ENCODE measurements at regions of chr9 and their contacts with region 1.

Region 1: GRCh38 chr9:35732122-35732799 is at the starts of genes CREB3 and TLN1:
- DNase-seq: peak; percentile 97 to 99 (median 99)
- H3K4me3 ChIP-seq: peak within 1 kb of the TSS; percentile 47 to 90 (median 66)
- H3K27ac ChIP-seq: peak within 1 kb of the TSS; percentile 83 to 99 (median 93)
- H3K4me1 ChIP-seq: peaks cover 48 to 57% of the 10 kb centered on the region in 2 donors
- H3K27me3 ChIP-seq: no peaks in the 10 kb centered on the region
- CTCF ChIP-seq: no peak
- POLR2A ChIP-seq: peak; percentile 46 to 90
- total RNA-seq, gene CREB3: 47.0 to 142 (median 60.3) TPM
- total RNA-seq, gene TLN1: 157 to 565 (median 372) TPM

Region 2: DNA sequence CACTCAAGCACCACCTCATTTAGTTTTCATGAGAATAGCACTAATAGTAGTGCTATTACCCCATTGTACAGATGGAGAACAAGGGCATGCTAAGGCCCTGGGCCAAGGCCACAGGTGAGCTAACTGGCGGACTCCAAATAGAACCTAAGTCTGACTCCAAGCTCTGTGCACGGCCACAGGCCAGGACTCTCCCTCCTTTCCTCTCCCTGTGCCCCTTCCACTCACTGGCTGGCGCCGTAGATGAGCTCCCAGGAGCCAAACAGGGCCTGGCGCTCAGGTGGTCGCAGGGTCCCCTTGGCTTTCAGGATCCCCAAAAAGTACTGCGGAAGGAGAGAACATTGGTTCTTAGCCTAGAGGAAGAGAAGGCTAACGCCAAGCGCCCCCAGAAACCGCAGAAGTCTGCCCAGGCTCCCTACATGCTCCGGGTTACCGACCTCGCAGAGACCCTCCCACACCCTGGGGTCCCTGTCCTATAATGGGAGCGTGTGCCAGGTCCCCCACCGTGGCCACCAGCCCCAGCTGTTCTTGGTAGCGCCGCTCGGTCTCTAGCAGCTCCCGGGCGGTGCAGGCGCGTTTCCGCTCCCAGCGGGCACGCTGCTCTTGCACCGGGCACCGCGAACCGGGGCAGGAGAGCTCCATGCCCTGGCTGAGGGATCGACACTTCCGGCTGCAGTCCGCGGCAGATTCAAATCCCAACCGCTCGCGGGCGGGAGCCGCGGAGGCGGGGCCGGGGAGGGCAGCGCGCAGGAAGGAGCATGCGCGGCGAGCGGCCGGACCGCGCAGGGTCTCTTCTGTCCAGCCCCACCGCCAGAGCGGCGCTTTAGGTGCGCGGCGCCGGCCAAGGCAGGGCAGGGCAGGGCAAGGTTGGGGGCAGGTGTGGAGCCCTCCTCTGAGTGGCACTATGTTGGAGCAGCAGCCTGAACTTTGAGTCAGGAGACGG is 67.5 kb before region 1 on chr9 and contains the start of gene ARHGEF39:
- intact Hi-C with region 1: loop called in 1 of 2 experiments (anchors 5 kb)
- DNase-seq: peak; percentile 79 to 91 (median 84)
- H3K4me3 ChIP-seq: peak within 1 kb of the TSS in 2 of 4 donors; percentile 47 to 64
- H3K27ac ChIP-seq: peak within 1 kb of the TSS in 3 of 5 donors; percentile 20 to 46 (median 44)
- H3K4me1 ChIP-seq: peaks cover 12 to 30% of the 10 kb centered on the region in 2 donors
- H3K27me3 ChIP-seq: no peaks in the 10 kb centered on the region
- CTCF ChIP-seq: peak in 2 of 6 experiments; percentile 4 to 19
- POLR2A ChIP-seq: peak; percentile 35 to 36
- total RNA-seq, gene ARHGEF39: 0.42 to 18.4 (median 0.96) TPM

Region 3: DNA sequence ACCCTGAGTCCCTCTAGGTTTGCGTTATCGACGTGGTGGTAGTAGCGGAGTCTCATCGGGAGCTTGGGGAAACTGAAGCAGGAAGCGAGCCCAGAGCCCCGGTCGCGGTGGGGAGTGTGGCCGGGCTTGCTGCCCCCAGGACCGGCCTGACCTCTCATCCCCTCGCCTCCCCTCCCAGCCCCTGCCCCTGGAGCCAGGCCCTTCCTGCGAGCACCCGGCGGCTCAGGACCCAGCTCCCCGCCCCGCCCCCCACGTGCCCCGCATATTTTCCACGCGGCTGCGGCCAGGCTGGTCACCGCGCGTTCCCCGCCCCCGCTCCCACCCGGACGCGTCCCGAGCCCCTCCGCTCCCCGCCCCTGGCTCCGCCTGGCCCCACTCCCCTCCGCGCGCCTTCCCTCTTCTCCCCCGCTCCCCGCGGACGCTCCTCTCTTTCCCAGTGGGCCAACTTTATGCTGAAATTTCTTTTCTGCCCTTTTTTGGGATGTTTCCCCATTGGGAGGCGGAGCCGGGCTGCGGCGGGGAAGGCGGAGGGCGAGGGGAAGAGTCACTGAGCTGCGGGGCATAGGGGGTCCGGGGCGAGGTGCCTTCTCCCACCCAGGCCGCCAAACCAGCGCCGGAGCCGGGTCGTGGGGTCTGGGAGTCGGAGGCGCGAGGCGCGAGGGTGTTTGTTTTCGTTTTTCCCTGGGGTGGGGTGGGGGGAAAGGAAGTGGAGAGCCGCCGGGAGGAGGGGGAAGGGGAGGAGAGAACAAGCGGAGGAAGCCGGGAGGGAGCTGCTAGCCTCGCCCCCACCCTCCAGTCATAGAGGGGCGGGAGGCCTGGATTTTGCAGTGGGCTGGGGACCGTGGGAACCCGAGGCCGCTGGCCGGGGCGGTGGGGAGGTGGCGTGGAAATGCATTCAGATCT is 41.6 kb before region 1 on chr9:
- intact Hi-C with region 1: loop called in 1 of 2 experiments (anchors 5 kb)
- DNase-seq: peak; percentile 60 to 84 (median 77)
- H3K4me3 ChIP-seq: peak overlapping the region; percentile 55 to 88 (median 66)
- H3K27ac ChIP-seq: peak overlapping the region; percentile 79 to 93 (median 89)
- H3K4me1 ChIP-seq: peaks cover 24 to 47% of the 10 kb centered on the region in 2 donors
- H3K27me3 ChIP-seq: no peaks in the 10 kb centered on the region
- CTCF ChIP-seq: no peak
- POLR2A ChIP-seq: peak in 1 of 2 donors; percentile 22